ENCODE measurements at regions of chr19 and their contacts with region 1.

Region 1: GRCh38 chr19:45792470-45793177 is at the start of gene DMWD:
- DNase-seq: peak; percentile 99
- ATAC-seq: peak; percentile 97
- H3K4me3 ChIP-seq: peak within 1 kb of the TSS; percentile 40 to 73 (median 59)
- H3K4me3 Mint-ChIP-seq: peak within 1 kb of the TSS; percentile 93
- H3K27ac ChIP-seq: peak within 1 kb of the TSS; percentile 22 to 76
- H3K27ac Mint-ChIP-seq: peak within 1 kb of the TSS; percentile 92
- H3K4me1 ChIP-seq: peaks cover 24 to 29% of the 10 kb centered on the region in 2 donors
- H3K4me1 Mint-ChIP-seq: peaks cover 30% of the 10 kb centered on the region
- H3K27me3 ChIP-seq: no peaks in the 10 kb centered on the region
- H3K27me3 Mint-ChIP-seq: peaks cover 8% of the 10 kb centered on the region
- CTCF ChIP-seq: no peak
- total RNA-seq, gene DMWD: 86.4 and 91.2 TPM in 2 replicates

Region 2: GRCh38 chr19:45584332-45585157 is 208.1 kb before region 1 on chr19 and contains the start of gene OPA3:
- CTCF ChIA-PET with region 1: no interaction called
- POLR2A ChIA-PET with region 1: no interaction called
- intact Hi-C with region 1: loop called (anchors 1 kb)
- DNase-seq: peak; percentile 100
- ATAC-seq: peak; percentile 87
- H3K4me3 ChIP-seq: peak within 1 kb of the TSS; percentile 62 to 98 (median 82)
- H3K4me3 Mint-ChIP-seq: peak within 1 kb of the TSS; percentile 85
- H3K27ac ChIP-seq: peak within 1 kb of the TSS; percentile 97 to 98
- H3K27ac Mint-ChIP-seq: peak within 1 kb of the TSS; percentile 99
- H3K4me1 ChIP-seq: peaks cover 10 to 15% of the 10 kb centered on the region in 2 donors
- H3K4me1 Mint-ChIP-seq: peaks cover 21% of the 10 kb centered on the region
- H3K27me3 ChIP-seq: no peaks in the 10 kb centered on the region
- H3K27me3 Mint-ChIP-seq: peaks cover 5% of the 10 kb centered on the region
- CTCF ChIP-seq: no peak
- total RNA-seq, gene OPA3: 11.2 and 11.4 TPM in 2 replicates

Region 3: GRCh38 chr19:45730389-45731288 is 62.0 kb before region 1 on chr19 and contains the start of gene FBXO46:
- CTCF ChIA-PET with region 1: interaction called, 3 read pairs
- POLR2A ChIA-PET with region 1: no interaction called
- intact Hi-C with region 1: loop called (anchors 2 kb)
- DNase-seq: peak; percentile 96
- ATAC-seq: peak; percentile 97
- H3K4me3 ChIP-seq: peak within 1 kb of the TSS; percentile 68 to 98 (median 87)
- H3K4me3 Mint-ChIP-seq: peak within 1 kb of the TSS; percentile 94
- H3K27ac ChIP-seq: peak within 1 kb of the TSS; percentile 54 to 94
- H3K27ac Mint-ChIP-seq: peak within 1 kb of the TSS; percentile 94
- H3K4me1 ChIP-seq: peaks cover 11 to 25% of the 10 kb centered on the region in 2 donors
- H3K4me1 Mint-ChIP-seq: peaks cover 28% of the 10 kb centered on the region
- H3K27me3 ChIP-seq: no peaks in the 10 kb centered on the region
- H3K27me3 Mint-ChIP-seq: no peaks in the 10 kb centered on the region
- CTCF ChIP-seq: peak; percentile 26
- total RNA-seq, gene FBXO46: 43.7 and 44.5 TPM in 2 replicates

Region 4: DNA sequence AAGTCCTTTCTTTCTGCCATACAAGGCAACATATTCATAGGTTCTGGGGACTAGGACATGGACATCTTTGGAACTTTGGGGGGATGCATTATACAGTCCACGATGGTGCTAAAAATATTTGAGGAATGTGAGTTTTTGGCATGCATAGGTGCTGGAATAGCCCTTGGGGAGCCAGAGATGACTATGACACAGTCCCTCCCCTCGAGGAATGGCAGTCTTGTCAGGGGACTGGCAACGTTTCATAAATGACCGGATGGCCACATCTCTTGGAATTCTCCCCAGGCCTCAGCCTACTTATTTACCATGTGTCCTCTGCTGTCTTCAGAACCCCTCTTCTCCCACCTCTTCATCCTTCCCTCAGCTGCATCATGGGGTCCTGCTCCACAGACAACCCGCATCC is 45.8 kb before region 1 on chr19:
- CTCF ChIA-PET with region 1: no interaction called
- POLR2A ChIA-PET with region 1: no interaction called
- intact Hi-C with region 1: no loop called
- DNase-seq: no peak
- ATAC-seq: no peak
- H3K4me3 ChIP-seq: no peak overlapping the region
- H3K4me3 Mint-ChIP-seq: no peak overlapping the region
- H3K27ac ChIP-seq: no peak overlapping the region
- H3K27ac Mint-ChIP-seq: no peak overlapping the region
- H3K4me1 ChIP-seq: no peaks in the 10 kb centered on the region
- H3K4me1 Mint-ChIP-seq: no peaks in the 10 kb centered on the region
- H3K27me3 ChIP-seq: peaks cover 0 to 8% (median 2%) of the 10 kb centered on the region in 4 experiments
- H3K27me3 Mint-ChIP-seq: peaks cover 17% of the 10 kb centered on the region
- CTCF ChIP-seq: no peak

Region 5: GRCh38 chr19:45761714-45762113 is 30.9 kb before region 1 on chr19:
- CTCF ChIA-PET with region 1: no interaction called
- POLR2A ChIA-PET with region 1: no interaction called
- intact Hi-C with region 1: no loop called
- DNase-seq: no peak
- ATAC-seq: no peak
- H3K4me3 ChIP-seq: no peak overlapping the region
- H3K4me3 Mint-ChIP-seq: no peak overlapping the region
- H3K27ac ChIP-seq: no peak overlapping the region
- H3K27ac Mint-ChIP-seq: no peak overlapping the region
- H3K4me1 ChIP-seq: no peaks in the 10 kb centered on the region
- H3K4me1 Mint-ChIP-seq: no peaks in the 10 kb centered on the region
- H3K27me3 ChIP-seq: peaks cover 0 to 28% (median 2%) of the 10 kb centered on the region in 4 experiments
- H3K27me3 Mint-ChIP-seq: peaks cover 17% of the 10 kb centered on the region
- CTCF ChIP-seq: no peak

Region 6: GRCh38 chr19:45779231-45780145 is 13.1 kb before region 1 on chr19:
- CTCF ChIA-PET with region 1: interaction called, 302 read pairs
- POLR2A ChIA-PET with region 1: no interaction called
- intact Hi-C with region 1: loop called (anchors 1 kb)
- DNase-seq: peak; percentile 90
- ATAC-seq: peak; percentile 96
- H3K4me3 ChIP-seq: peak overlapping the region in 4 of 5 experiments; percentile 13 to 61 (median 42)
- H3K4me3 Mint-ChIP-seq: peak overlapping the region; percentile 87
- H3K27ac ChIP-seq: no peak overlapping the region
- H3K27ac Mint-ChIP-seq: peak overlapping the region; percentile 46
- H3K4me1 ChIP-seq: peaks cover 17 to 22% of the 10 kb centered on the region in 2 donors
- H3K4me1 Mint-ChIP-seq: peaks cover 19% of the 10 kb centered on the region
- H3K27me3 ChIP-seq: peaks cover 0 to 23% (median 2%) of the 10 kb centered on the region in 4 experiments
- H3K27me3 Mint-ChIP-seq: peaks cover 10% of the 10 kb centered on the region
- CTCF ChIP-seq: peak; percentile 68

Region 7: DNA sequence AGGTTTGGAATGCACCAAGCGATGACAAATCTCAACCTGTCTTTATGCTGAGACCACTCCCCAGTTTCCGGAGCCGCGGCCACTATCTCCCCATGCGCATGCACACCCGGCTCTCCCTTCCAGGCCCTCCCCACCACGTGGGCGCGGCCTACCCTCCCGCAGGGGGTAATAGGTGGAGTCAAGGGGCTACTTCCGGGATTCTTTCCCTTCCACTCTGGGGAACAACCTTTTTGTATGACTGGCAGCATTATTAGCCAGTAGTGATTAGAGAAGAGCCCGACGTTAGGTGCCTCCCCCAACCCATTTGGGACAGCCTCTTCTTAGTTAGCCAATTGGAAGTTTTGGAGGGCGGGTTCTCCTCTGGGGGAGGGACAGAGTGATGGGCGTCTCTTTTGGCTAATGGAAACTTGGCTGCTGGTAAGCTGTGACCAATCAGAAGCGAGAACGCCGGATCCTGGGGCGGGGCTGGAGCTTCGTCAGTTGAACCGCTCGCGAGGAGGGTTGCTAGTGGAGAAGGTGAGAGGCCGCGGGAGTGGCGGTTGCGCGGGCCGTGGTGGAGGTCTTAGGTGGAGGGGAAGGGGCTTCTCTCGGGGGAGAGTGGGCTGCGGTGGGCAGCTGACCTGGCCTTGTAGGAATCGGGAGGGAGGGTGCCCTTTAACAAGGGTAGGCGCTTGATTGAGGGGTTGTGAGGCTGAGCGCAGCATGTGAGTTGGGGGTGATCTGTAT is 202.5 kb after region 1 on chr19 and contains the start of gene CCDC61:
- CTCF ChIA-PET with region 1: no interaction called
- POLR2A ChIA-PET with region 1: no interaction called
- intact Hi-C with region 1: loop called (anchors 10 kb)
- DNase-seq: peak; percentile 99
- ATAC-seq: peak; percentile 93
- H3K4me3 ChIP-seq: peak within 1 kb of the TSS; percentile 71 to 92 (median 78)
- H3K4me3 Mint-ChIP-seq: peak within 1 kb of the TSS; percentile 58
- H3K27ac ChIP-seq: peak within 1 kb of the TSS; percentile 55 to 84
- H3K27ac Mint-ChIP-seq: no peak within 1 kb of the TSS
- H3K4me1 ChIP-seq: peaks cover 19 to 21% of the 10 kb centered on the region in 2 donors
- H3K4me1 Mint-ChIP-seq: peaks cover 27% of the 10 kb centered on the region
- H3K27me3 ChIP-seq: peaks cover 0 to 9% (median 5%) of the 10 kb centered on the region in 4 experiments
- H3K27me3 Mint-ChIP-seq: peaks cover 21% of the 10 kb centered on the region
- CTCF ChIP-seq: no peak
- total RNA-seq, gene CCDC61: 30.1 and 37.0 TPM in 2 replicates

Measured in B cell (primary cell).